Mammary epithelial cell (primary cell): ENCODE measurements at regions of chr6 and their contacts with region 1.

Region 1: GRCh38 chr6:152750694-152751093 is at the start of gene VIP:
- DNase-seq: peak; percentile 45
- H3K4me3 ChIP-seq: no peak within 1 kb of the TSS
- H3K27ac ChIP-seq: no peak within 1 kb of the TSS
- H3K4me1 ChIP-seq: peaks cover 4% of the 10 kb centered on the region
- H3K27me3 ChIP-seq: no peaks in the 10 kb centered on the region
- CTCF ChIP-seq: no peak
- total RNA-seq, gene VIP: not detected

Region 2: GRCh38 chr6:152815230-152815872 is 64.7 kb after region 1 on chr6:
- CTCF ChIA-PET with region 1: no interaction called
- dilution Hi-C with region 1: loop called (anchors 5 kb)
- in situ Hi-C with region 1: no loop called
- intact Hi-C with region 1: no loop called
- DNase-seq: no peak
- H3K4me3 ChIP-seq: no peak overlapping the region
- H3K27ac ChIP-seq: no peak overlapping the region
- H3K4me1 ChIP-seq: no peaks in the 10 kb centered on the region
- H3K27me3 ChIP-seq: no peaks in the 10 kb centered on the region
- CTCF ChIP-seq: no peak

Region 3: DNA sequence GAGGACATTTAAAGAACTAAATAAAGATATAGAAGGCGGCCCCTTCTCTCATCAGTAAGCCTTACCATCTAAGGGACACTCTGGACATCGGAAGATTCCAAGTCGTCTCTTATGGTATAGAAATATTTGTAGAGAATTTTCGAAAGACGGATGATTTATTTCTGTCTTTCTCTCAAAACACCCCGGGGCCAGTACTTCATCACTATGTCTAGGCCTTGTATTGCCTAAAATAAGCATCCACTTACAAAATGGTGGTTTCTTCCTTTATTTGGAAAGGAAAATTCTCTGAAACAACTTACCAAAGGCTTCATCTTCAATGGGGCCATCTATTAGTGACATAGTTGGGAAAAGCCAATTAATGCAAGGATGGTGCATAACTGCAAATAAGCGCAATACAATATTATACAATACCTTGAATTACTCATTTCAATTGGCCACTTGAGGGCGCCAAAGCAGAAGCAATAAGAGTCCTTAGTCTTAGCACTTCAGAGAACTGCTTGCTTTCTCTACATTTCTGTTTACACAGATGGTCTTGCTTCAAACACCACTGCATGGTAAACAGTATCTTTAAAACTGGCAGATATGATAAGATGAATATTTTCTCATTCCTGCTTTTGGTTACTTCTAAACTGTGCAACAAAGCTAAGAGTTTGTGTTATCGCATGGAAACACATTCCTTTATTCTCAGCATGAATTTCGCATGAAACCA is 113.1 kb after region 1 on chr6:
- CTCF ChIA-PET with region 1: no interaction called
- dilution Hi-C with region 1: no loop called
- in situ Hi-C with region 1: no loop called
- intact Hi-C with region 1: loop called (anchors 2 kb)
- DNase-seq: peak; percentile 51
- H3K4me3 ChIP-seq: no peak overlapping the region
- H3K27ac ChIP-seq: no peak overlapping the region
- H3K4me1 ChIP-seq: no peaks in the 10 kb centered on the region
- H3K27me3 ChIP-seq: peaks cover 3% of the 10 kb centered on the region
- CTCF ChIP-seq: peak; percentile 60 to 63

Region 4: DNA sequence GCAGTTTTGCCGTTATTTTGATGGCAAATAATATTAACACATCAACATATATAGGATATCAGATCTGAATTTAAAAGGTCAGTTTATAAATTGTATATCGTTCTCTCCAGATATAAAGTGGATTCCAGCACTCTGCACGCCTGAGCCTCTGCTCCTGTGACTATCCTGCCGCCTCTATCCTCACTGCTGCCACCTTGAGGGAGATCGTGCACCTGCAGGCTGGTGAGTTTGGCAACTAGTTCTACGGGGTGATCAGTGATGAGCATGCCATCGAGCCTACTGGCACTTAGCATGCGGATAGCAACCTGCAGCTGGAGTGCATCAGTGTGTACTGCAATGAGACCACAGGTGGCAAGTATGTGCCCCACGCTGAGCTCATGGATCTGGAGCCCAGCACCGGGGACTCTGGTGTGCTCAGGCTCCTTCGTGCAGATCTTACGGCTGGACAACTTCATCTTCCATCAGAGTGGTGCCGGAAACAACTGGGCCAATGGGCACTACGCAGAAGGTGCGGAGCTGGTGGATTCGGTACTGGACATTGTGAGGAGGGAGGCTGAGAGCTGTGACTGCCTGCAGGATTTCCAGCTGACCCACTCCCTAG is 147.2 kb after region 1 on chr6:
- CTCF ChIA-PET with region 1: interaction called, 4 read pairs
- dilution Hi-C with region 1: no loop called
- in situ Hi-C with region 1: no loop called
- intact Hi-C with region 1: loop called (anchors 2 kb)
- DNase-seq: peak; percentile 56
- H3K4me3 ChIP-seq: no peak overlapping the region
- H3K27ac ChIP-seq: no peak overlapping the region
- H3K4me1 ChIP-seq: no peaks in the 10 kb centered on the region
- H3K27me3 ChIP-seq: no peaks in the 10 kb centered on the region
- CTCF ChIP-seq: peak; percentile 92 to 96

Region 5: GRCh38 chr6:153023977-153024708 is 273.4 kb after region 1 on chr6:
- CTCF ChIA-PET with region 1: no interaction called
- dilution Hi-C with region 1: no loop called
- in situ Hi-C with region 1: no loop called
- intact Hi-C with region 1: loop called (anchors 5 kb)
- DNase-seq: peak; percentile 54
- H3K4me3 ChIP-seq: no peak overlapping the region
- H3K27ac ChIP-seq: no peak overlapping the region
- H3K4me1 ChIP-seq: no peaks in the 10 kb centered on the region
- H3K27me3 ChIP-seq: no peaks in the 10 kb centered on the region
- CTCF ChIP-seq: peak; percentile 78 to 79